Mammary epithelial cell (primary cell): ENCODE measurements at regions of chr5 and their contacts with region 1.

Region 1: GRCh38 chr5:143557061-143557818 is 153.8 kb upstream of the NR3C1 start:
- DNase-seq: peak; percentile 29
- H3K4me3 ChIP-seq: no peak overlapping the region
- H3K27ac ChIP-seq: no peak overlapping the region
- H3K4me1 ChIP-seq: peaks cover 17% of the 10 kb centered on the region
- H3K27me3 ChIP-seq: no peaks in the 10 kb centered on the region
- CTCF ChIP-seq: no peak

Region 2: GRCh38 chr5:143594913-143595841 is 37.9 kb after region 1 on chr5:
- CTCF ChIA-PET with region 1: no interaction called
- dilution Hi-C with region 1: no loop called
- in situ Hi-C with region 1: no loop called
- intact Hi-C with region 1: loop called (anchors 5 kb)
- DNase-seq: peak; percentile 56
- H3K4me3 ChIP-seq: no peak overlapping the region
- H3K27ac ChIP-seq: peak overlapping the region; percentile 69
- H3K4me1 ChIP-seq: peaks cover 24% of the 10 kb centered on the region
- H3K27me3 ChIP-seq: no peaks in the 10 kb centered on the region
- CTCF ChIP-seq: no peak